ENCODE measurements at regions of chr12 and their contacts with region 1.

Region 1: GRCh38 chr12:57124259-57124877 is 3.9 kb upstream of the LRP1 start:
- DNase-seq: peak; percentile 50 to 82 (median 72)
- ATAC-seq: peak; percentile 87
- H3K4me3 ChIP-seq: no peak overlapping the region
- H3K4me3 Mint-ChIP-seq: peak overlapping the region in 2 of 10 donors; percentile 20 to 24
- H3K27ac ChIP-seq: no peak overlapping the region
- H3K27ac Mint-ChIP-seq: peak overlapping the region in 2 of 9 donors; percentile 15 to 37
- H3K4me1 ChIP-seq: peaks cover 0 to 6% of the 10 kb centered on the region in 2 donors
- H3K4me1 Mint-ChIP-seq: peaks cover 2 to 16% (median 6%) of the 10 kb centered on the region in 7 donors
- H3K27me3 ChIP-seq: no peaks in the 10 kb centered on the region
- H3K27me3 Mint-ChIP-seq: peaks cover 0 to 34% (median 0%) of the 10 kb centered on the region in 5 donors

Region 2: DNA sequence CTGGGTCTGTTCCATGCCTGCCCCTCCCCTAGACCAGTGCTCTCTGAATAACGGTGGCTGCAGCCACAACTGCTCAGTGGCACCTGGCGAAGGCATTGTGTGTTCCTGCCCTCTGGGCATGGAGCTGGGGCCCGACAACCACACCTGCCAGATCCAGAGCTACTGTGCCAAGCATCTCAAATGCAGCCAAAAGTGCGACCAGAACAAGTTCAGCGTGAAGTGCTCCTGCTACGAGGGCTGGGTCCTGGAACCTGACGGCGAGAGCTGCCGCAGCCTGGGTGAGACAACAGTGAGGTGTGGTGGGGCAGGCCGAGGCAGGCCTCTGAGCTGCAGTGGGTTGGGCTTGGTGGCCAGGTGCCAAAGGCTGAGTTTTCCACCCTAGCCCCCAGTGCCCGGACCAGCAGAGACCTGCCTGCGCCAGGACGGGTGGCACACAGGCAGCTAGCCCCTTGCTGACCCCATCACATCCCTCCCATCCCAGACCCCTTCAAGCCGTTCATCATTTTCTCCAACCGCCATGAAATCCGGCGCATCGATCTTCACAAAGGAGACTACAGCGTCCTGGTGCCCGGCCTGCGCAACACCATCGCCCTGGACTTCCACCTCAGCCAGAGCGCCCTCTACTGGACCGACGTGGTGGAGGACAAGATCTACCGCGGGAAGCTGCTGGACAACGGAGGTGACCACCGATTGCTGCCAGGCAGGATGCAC is 51.2 kb after region 1 on chr12:
- CTCF ChIA-PET with region 1: interaction called, 162 read pairs
- POLR2A ChIA-PET with region 1: no interaction called
- intact Hi-C with region 1: loop called (anchors 1 kb)
- DNase-seq: peak in 4 of 9 donors; percentile 13 to 66 (median 26)
- ATAC-seq: peak; percentile 63
- H3K4me3 ChIP-seq: no peak overlapping the region
- H3K4me3 Mint-ChIP-seq: no peak overlapping the region
- H3K27ac ChIP-seq: no peak overlapping the region
- H3K27ac Mint-ChIP-seq: peak overlapping the region in 1 of 9 donors; percentile 46
- H3K4me1 ChIP-seq: no peaks in the 10 kb centered on the region
- H3K4me1 Mint-ChIP-seq: peaks cover 0 to 6% (median 0%) of the 10 kb centered on the region in 7 donors
- H3K27me3 ChIP-seq: no peaks in the 10 kb centered on the region
- H3K27me3 Mint-ChIP-seq: no peaks in the 10 kb centered on the region

Region 3: DNA sequence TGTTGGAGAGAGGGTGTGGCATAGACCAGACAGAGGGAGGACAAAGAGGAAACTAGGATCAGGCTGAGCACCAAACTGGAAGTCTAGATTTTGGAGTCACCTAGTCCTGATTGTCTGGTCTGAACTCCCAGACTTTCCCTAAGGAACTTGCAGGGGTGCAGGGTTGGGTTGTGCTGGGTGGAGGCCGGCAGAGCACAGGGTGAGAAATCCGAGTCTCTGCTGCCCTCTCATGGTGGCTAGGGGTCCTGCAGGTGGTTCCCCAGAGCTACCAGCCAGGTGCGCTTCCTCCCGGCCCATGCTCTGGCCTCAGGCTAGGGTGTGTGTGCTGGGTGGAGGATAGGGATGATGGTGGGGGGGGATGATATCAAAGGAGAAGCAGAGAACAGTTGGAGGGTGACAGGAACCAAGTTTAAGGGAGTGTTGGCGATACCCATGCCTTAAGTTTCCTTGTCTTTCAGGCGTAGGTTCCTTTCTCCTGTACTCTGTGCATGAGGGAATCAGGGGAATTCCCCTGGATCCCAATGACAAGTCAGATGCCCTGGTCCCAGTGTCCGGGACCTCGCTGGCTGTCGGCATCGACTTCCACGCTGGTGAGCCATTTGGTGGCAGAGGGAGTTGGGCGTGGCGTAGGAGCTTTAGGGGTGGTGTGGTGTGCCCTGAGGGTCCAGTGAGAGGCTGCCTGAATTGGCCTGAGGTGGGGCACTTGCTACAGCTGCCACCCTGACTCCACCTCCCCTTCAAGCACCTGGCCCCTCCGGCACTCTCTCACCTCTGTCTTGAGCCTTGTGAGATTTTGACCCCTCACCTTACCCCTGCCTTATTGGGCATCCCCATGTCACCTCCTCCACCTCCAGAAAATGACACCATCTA is 58.8 kb after region 1 on chr12:
- CTCF ChIA-PET with region 1: interaction called, 162 read pairs
- POLR2A ChIA-PET with region 1: interaction called, 5 read pairs
- intact Hi-C with region 1: loop called (anchors 1 kb)
- DNase-seq: peak; percentile 54 to 85 (median 73)
- ATAC-seq: peak; percentile 95
- H3K4me3 ChIP-seq: no peak overlapping the region
- H3K4me3 Mint-ChIP-seq: no peak overlapping the region
- H3K27ac ChIP-seq: no peak overlapping the region
- H3K27ac Mint-ChIP-seq: peak overlapping the region in 1 of 9 donors; percentile 24
- H3K4me1 ChIP-seq: no peaks in the 10 kb centered on the region
- H3K4me1 Mint-ChIP-seq: peaks cover 2 to 10% (median 6%) of the 10 kb centered on the region in 7 donors
- H3K27me3 ChIP-seq: no peaks in the 10 kb centered on the region
- H3K27me3 Mint-ChIP-seq: peaks cover 0 to 2% (median 0%) of the 10 kb centered on the region in 5 donors

Region 4: GRCh38 chr12:57238854-57239554 is 114.6 kb after region 1 on chr12:
- CTCF ChIA-PET with region 1: interaction called, 6 read pairs
- POLR2A ChIA-PET with region 1: interaction called, 3 read pairs
- intact Hi-C with region 1: loop called (anchors 1 to 2 kb)
- DNase-seq: peak; percentile 72 to 94 (median 85)
- ATAC-seq: peak; percentile 89
- H3K4me3 ChIP-seq: peak overlapping the region; percentile 80
- H3K4me3 Mint-ChIP-seq: peak overlapping the region; percentile 87 to 99 (median 95)
- H3K27ac ChIP-seq: no peak overlapping the region
- H3K27ac Mint-ChIP-seq: peak overlapping the region in 6 of 9 donors; percentile 24 to 83 (median 64)
- H3K4me1 ChIP-seq: peaks cover 45 to 70% of the 10 kb centered on the region in 2 donors
- H3K4me1 Mint-ChIP-seq: peaks cover 52 to 82% (median 66%) of the 10 kb centered on the region in 7 donors
- H3K27me3 ChIP-seq: peaks cover 7 to 18% of the 10 kb centered on the region in 2 donors
- H3K27me3 Mint-ChIP-seq: peaks cover 48 to 72% (median 55%) of the 10 kb centered on the region in 5 donors